G401 (cell line): ENCODE measurements at regions of chr9 and their contacts with region 1.

Region 1: GRCh38 chr9:124480621-124480981 is 26.6 kb downstream of the NR5A1 start:
- DNase-seq: peak; percentile 11

Region 2: DNA sequence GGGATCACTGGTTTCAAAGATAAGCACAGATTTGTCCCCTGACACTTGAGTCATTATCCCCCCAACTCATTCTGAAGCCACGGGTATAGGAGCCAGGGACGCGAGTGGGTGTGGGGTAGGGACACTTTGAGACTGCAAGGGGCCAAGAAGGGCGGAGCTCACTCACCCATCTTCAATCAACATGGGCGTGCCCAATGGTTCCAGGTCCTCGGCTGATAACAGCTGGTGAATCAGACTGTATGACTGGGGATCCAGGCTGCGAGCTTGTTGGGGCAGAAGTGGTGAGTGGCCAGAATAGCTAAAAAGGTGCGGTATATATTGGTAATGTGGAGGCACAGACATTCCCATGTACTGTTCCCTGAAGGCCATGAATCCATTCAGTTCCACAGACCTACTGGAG is 57.3 kb after region 1 on chr9:
- in situ Hi-C with region 1: loop called (anchors 5 kb)
- DNase-seq: no peak

Region 3: GRCh38 chr9:124574534-124575341 is 94.1 kb after region 1 on chr9:
- in situ Hi-C with region 1: no loop called
- DNase-seq: no peak